K562 (cell line): ENCODE measurements at regions of chr2 and their contacts with region 1.

Region 1: DNA sequence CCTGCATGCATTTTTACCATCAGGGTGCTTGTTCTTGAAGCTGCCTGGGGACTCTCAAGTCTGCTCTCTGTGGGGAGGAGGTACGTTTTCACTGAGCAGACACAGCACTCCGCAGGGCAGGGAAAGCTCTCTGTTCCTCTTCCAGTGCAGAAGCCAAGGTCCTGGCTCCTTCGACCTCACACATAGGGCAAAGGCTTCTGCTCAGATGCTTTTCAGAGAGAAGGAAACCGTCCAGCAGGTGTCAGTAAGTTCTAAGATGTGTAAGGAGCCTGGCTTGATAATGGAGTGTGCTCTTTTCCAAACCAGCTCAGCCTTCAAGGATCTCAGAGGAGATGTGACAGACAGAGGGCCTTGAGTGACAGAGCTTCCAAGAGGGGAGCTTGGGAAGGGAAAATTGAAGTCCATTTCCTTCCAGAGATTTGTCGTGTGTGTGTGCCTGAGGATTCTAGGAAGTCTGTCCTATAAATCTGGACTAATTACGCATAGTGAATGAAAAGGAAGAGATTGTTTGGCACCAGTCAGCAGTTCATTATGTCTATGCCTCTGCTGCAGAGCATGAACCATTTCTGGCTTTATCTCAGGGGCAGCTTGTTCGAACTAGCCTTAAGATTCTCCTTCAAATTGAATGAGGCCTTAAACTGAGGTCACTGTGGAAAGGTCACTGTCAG is 67.3 kb upstream of the UPP2 start:
- DNase-seq: peak; percentile 24 to 74 (median 43)
- ATAC-seq: peak; percentile 96
- H3K4me3 ChIP-seq: no peak overlapping the region
- H3K27ac ChIP-seq: no peak overlapping the region
- H3K4me1 ChIP-seq: no peaks in the 10 kb centered on the region
- H3K27me3 ChIP-seq: peaks cover 3 to 7% of the 10 kb centered on the region in 2 experiments; a peak in 3 of 5 replicates
- CTCF ChIP-seq: peak; percentile 65 to 85 (median 75)
- EP300 ChIP-seq: no peak
- POLR2A ChIP-seq: no peak
- RAD21 ChIP-seq: peak; percentile 88 to 91

Region 2: GRCh38 chr2:157761520-157761919 is 272.8 kb before region 1 on chr2:
- CTCF ChIA-PET with region 1: no interaction called
- POLR2A ChIA-PET with region 1: no interaction called
- in situ Hi-C with region 1: no loop called
- intact Hi-C with region 1: no loop called
- DNase-seq: no peak
- ATAC-seq: peak; percentile 25; the same call in 2 of the 3 replicates
- H3K4me3 ChIP-seq: no peak overlapping the region
- H3K27ac ChIP-seq: no peak overlapping the region
- H3K4me1 ChIP-seq: no peaks in the 10 kb centered on the region
- H3K27me3 ChIP-seq: no peaks in the 10 kb centered on the region
- CTCF ChIP-seq: no peak
- EP300 ChIP-seq: no peak
- POLR2A ChIP-seq: no peak
- RAD21 ChIP-seq: no peak

Region 3: GRCh38 chr2:158179660-158180059 is 145.3 kb after region 1 on chr2:
- CTCF ChIA-PET with region 1: no interaction called
- POLR2A ChIA-PET with region 1: no interaction called
- in situ Hi-C with region 1: no loop called
- intact Hi-C with region 1: loop called (anchors 2 kb)
- DNase-seq: peak in 1 of 4 experiments; percentile 39
- ATAC-seq: peak; percentile 81
- H3K4me3 ChIP-seq: no peak overlapping the region
- H3K27ac ChIP-seq: no peak overlapping the region
- H3K4me1 ChIP-seq: no peaks in the 10 kb centered on the region
- H3K27me3 ChIP-seq: no peaks in the 10 kb centered on the region
- CTCF ChIP-seq: peak; percentile 36 to 69 (median 56); a peak in 5 of 6 replicates
- EP300 ChIP-seq: no peak
- POLR2A ChIP-seq: no peak
- RAD21 ChIP-seq: peak; percentile 60 to 84

Region 4: DNA sequence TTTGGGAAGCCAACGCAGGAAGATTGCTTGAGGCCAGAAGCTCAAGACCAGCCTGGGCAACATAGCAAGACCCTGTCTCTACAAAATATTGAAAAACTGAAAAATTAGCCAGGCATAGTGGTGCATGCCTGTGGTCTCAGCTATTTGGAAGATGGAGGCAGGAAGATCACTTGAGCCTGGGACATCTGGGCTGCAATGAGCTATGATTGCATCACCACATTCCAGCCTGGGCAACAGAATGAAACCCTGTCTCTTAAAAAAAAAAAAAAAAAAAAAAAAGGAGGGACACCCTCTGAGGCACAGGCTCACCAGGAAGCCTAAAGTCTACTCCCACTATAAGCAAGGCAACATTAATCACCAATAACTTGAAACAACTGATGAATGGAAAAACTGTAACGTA is 271.2 kb after region 1 on chr2:
- CTCF ChIA-PET with region 1: no interaction called
- POLR2A ChIA-PET with region 1: no interaction called
- in situ Hi-C with region 1: no loop called
- intact Hi-C with region 1: loop called (anchors 10 kb)
- DNase-seq: no peak
- ATAC-seq: no peak
- H3K4me3 ChIP-seq: no peak overlapping the region
- H3K27ac ChIP-seq: no peak overlapping the region
- H3K4me1 ChIP-seq: no peaks in the 10 kb centered on the region; a peak in 1 of 5 replicates
- H3K27me3 ChIP-seq: no peaks in the 10 kb centered on the region
- CTCF ChIP-seq: no peak
- EP300 ChIP-seq: no peak
- POLR2A ChIP-seq: no peak
- RAD21 ChIP-seq: no peak

Region 5: DNA sequence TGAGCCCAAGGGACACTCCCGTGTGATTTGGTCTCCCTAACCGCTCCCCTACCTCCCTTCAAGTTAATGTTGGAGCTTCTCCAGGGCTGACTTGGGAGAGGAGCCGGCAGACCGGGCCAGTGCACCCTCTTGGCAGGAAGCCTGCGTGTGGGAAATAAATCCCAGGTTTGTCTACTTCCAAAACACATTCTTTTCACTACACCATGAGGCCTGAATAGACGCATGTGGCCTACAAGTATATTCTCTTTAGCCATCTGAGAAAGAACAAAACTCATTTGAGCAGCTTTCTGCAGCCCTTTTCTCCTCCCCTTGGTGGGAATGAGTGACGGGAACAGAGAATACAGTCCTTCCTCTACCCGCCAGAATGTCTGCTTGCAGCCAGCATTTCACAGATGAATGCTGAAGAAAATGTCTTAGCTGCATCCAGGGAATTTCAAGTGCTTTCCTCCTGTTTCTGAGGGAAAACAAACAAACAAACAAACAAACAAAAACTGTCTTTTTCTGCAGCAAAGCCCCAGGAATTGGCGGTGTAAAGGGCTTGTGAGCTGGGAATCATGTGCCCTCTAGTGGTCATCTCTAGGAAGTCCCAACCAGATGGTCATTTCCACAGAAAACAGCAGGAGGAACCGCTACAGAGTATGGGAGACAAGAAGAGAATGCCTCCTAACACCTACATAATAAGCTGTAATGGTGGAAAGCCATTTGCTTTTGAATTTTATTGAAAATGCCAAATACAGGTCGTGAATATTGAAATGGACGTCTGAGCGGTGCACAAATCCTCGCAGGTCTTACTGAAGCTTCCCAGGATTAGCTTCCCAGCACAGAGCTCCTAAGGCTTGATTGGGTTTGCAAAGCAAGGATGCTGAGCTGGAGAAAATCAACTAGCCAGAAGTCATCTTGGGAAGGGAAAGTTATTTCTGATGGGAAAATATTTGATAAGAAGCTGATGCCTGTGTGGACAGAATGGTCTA is 719.6 kb after region 1 on chr2:
- CTCF ChIA-PET with region 1: interaction called, 4 read pairs
- POLR2A ChIA-PET with region 1: interaction called, 3 read pairs
- in situ Hi-C with region 1: loop called (anchors 5 kb)
- intact Hi-C with region 1: loop called (anchors 2 kb)
- DNase-seq: peak; percentile 74 to 84 (median 82)
- ATAC-seq: peak; percentile 97
- H3K4me3 ChIP-seq: no peak overlapping the region
- H3K27ac ChIP-seq: no peak overlapping the region
- H3K4me1 ChIP-seq: no peaks in the 10 kb centered on the region
- H3K27me3 ChIP-seq: peaks cover 4 to 18% of the 10 kb centered on the region in 2 experiments; a peak in 4 of 5 replicates
- CTCF ChIP-seq: peak; percentile 89 to 93 (median 90)
- EP300 ChIP-seq: no peak
- POLR2A ChIP-seq: no peak
- RAD21 ChIP-seq: peak; percentile 85 to 88

Region 6: GRCh38 chr2:159118115-159118858 is 1084.0 kb after region 1 on chr2:
- CTCF ChIA-PET with region 1: no interaction called
- POLR2A ChIA-PET with region 1: no interaction called
- in situ Hi-C with region 1: no loop called
- intact Hi-C with region 1: loop called (anchors 10 kb)
- DNase-seq: peak; percentile 67 to 89 (median 76)
- ATAC-seq: peak; percentile 97
- H3K4me3 ChIP-seq: no peak overlapping the region
- H3K27ac ChIP-seq: no peak overlapping the region
- H3K4me1 ChIP-seq: peaks cover 5 to 9% of the 10 kb centered on the region in 2 experiments; a peak in 4 of 5 replicates
- H3K27me3 ChIP-seq: peaks cover 3 to 6% of the 10 kb centered on the region in 2 experiments; a peak in 4 of 5 replicates
- CTCF ChIP-seq: peak; percentile 85 to 94 (median 94)
- EP300 ChIP-seq: no peak
- POLR2A ChIP-seq: no peak
- RAD21 ChIP-seq: peak; percentile 96 to 98